Dendritic cell treated with granulocyte-macrophage colony-stimulating factor and Interleukin-4, amounts not matched to agents 40 ng/mL and 50 ng/mL, for 4 days (primary cell): ENCODE measurements at regions of chr2 and their contacts with region 1.

Region 1: GRCh38 chr2:121080013-121080772 is 204.8 kb downstream of the TFCP2L1 start:
- H3K4me3 Mint-ChIP-seq: no peak overlapping the region
- H3K27ac Mint-ChIP-seq: no peak overlapping the region
- H3K4me1 Mint-ChIP-seq: no peaks in the 10 kb centered on the region
- H3K27me3 Mint-ChIP-seq: peaks cover 39% of the 10 kb centered on the region

Region 2: GRCh38 chr2:120396013-120396885 is 683.9 kb before region 1 on chr2:
- intact Hi-C with region 1: no loop called
- H3K4me3 Mint-ChIP-seq: no peak overlapping the region
- H3K27ac Mint-ChIP-seq: no peak overlapping the region
- H3K4me1 Mint-ChIP-seq: no peaks in the 10 kb centered on the region
- H3K27me3 Mint-ChIP-seq: peaks cover 7% of the 10 kb centered on the region

Region 3: GRCh38 chr2:120699292-120699691 is 380.9 kb before region 1 on chr2:
- intact Hi-C with region 1: loop called (anchors 5 kb)
- H3K4me3 Mint-ChIP-seq: no peak overlapping the region
- H3K27ac Mint-ChIP-seq: no peak overlapping the region
- H3K4me1 Mint-ChIP-seq: no peaks in the 10 kb centered on the region
- H3K27me3 Mint-ChIP-seq: peaks cover 37% of the 10 kb centered on the region

Region 4: GRCh38 chr2:121066526-121066925 is 13.7 kb before region 1 on chr2:
- intact Hi-C with region 1: no loop called
- H3K4me3 Mint-ChIP-seq: no peak overlapping the region
- H3K27ac Mint-ChIP-seq: no peak overlapping the region
- H3K4me1 Mint-ChIP-seq: no peaks in the 10 kb centered on the region
- H3K27me3 Mint-ChIP-seq: no peaks in the 10 kb centered on the region